ENCODE measurements at regions of chr13 and their contacts with region 1.

Region 1: DNA sequence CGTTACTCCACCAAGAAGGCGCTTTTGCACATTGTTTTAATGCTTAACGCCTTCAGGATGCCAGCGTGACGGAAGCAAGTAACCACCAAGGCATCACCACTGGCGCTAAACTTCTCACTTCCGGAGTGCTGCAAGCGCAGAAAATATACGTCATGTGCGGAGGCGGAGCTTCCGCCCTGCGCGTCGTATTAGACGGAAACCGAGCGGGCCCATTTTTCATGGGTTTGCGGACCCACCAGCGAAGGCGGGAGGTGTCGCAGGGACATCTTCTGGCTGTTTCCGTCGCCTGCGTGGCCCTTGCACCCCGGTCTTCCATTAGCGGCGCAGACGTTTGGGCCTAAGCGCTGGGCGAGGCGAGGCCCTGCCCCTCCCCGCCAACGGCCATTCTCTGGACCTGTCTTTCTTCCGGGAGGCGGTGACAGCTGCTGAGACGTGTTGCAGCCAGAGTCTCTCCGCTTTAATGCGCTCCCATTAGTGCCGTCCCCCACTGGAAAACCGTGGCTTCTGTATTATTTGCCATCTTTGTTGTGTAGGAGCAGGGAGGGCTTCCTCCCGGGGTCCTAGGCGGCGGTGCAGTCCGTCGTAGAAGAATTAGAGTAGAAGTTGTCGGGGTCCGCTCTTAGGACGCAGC is at the start of gene ERCC5:
- DNase-seq: peak; percentile 94
- H3K4me3 ChIP-seq: peak within 1 kb of the TSS; percentile 75 to 97 (median 87)
- H3K27ac ChIP-seq: peak within 1 kb of the TSS; percentile 78
- H3K4me1 ChIP-seq: peaks cover 7% of the 10 kb centered on the region
- H3K27me3 ChIP-seq: no peaks in the 10 kb centered on the region
- CTCF ChIP-seq: no peak
- POLR2A ChIP-seq: peak; percentile 91
- total RNA-seq, gene ERCC5: 36.0 and 40.1 TPM in 2 replicates

Region 2: GRCh38 chr13:101452519-101453485 is 1392.9 kb before region 1 on chr13 and contains the start of gene ITGBL1:
- CTCF ChIA-PET with region 1: no interaction called
- POLR2A ChIA-PET with region 1: no interaction called
- dilution Hi-C with region 1: no loop called
- intact Hi-C with region 1: loop called (anchors 10 kb)
- DNase-seq: peak; percentile 48
- H3K4me3 ChIP-seq: peak within 1 kb of the TSS in 2 of 3 experiments; percentile 24 to 37
- H3K27ac ChIP-seq: peak within 1 kb of the TSS; percentile 94
- H3K4me1 ChIP-seq: peaks cover 68% of the 10 kb centered on the region
- H3K27me3 ChIP-seq: no peaks in the 10 kb centered on the region
- CTCF ChIP-seq: no peak
- POLR2A ChIP-seq: no peak
- total RNA-seq, gene ITGBL1: 8.8 and 9.9 TPM in 2 replicates

Region 3: DNA sequence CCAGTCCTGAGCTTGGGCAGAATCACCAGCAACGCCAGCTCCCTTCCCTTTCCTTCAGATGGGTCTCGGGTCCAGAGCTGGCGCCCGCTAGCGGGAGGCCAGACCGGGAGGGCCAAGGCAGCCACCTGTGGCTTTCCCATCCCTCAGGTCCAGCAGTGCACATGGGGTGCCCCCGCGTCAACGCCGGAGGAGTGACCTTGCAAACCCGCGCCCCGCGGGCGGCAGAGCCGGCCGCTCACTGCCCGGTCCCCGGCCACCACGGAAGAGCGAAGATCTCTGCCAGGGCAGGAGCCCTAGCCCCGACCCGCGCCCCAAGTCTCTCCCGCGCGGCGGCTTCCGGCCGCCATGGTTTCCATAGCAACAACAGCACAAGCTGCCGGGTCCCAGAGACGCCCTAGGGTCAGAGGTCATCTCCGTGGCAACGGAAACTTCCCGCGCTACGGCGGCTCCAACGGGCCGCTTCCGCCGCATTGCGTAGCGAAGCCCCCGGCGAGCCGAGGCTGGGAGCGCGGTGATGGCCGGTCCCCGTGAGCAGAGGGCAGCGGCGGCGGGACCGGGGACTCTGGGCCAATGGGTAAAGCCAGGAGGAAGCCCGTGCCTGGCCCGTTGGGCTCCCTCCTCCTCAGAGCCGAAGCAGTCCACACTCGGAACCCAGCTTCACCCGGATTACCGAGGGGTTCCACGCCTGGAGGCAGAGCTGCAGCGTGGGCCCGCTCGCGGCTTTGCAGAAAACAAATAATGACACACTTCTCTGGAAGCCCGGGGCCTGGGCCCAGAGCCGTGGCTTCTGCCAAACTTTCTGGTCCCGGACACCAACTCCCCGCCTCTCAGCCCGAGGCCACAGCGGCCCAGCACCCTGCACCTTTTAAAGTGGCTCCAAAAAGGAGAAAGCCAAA is 451.3 kb before region 1 on chr13:
- CTCF ChIA-PET with region 1: no interaction called
- POLR2A ChIA-PET with region 1: no interaction called
- dilution Hi-C with region 1: no loop called
- intact Hi-C with region 1: loop called (anchors 5 kb)
- DNase-seq: peak; percentile 75
- H3K4me3 ChIP-seq: peak overlapping the region; percentile 60 to 68 (median 65)
- H3K27ac ChIP-seq: no peak overlapping the region
- H3K4me1 ChIP-seq: peaks cover 9% of the 10 kb centered on the region
- H3K27me3 ChIP-seq: peaks cover 11 to 26% of the 10 kb centered on the region in 2 experiments
- CTCF ChIP-seq: peak in 1 of 2 donors; percentile 30
- POLR2A ChIP-seq: no peak

Region 4: GRCh38 chr13:102596147-102597028 is 249.4 kb before region 1 on chr13 and contains the start of gene TPP2:
- CTCF ChIA-PET with region 1: interaction called, 19 read pairs
- POLR2A ChIA-PET with region 1: interaction called, 5 read pairs
- dilution Hi-C with region 1: loop called (anchors 25 kb)
- intact Hi-C with region 1: loop called (anchors 1 kb)
- DNase-seq: peak; percentile 99
- H3K4me3 ChIP-seq: peak within 1 kb of the TSS; percentile 92 to 99 (median 97)
- H3K27ac ChIP-seq: peak within 1 kb of the TSS; percentile 94
- H3K4me1 ChIP-seq: peaks cover 32% of the 10 kb centered on the region
- H3K27me3 ChIP-seq: no peaks in the 10 kb centered on the region
- CTCF ChIP-seq: no peak
- POLR2A ChIP-seq: peak; percentile 84
- total RNA-seq, gene TPP2: 46.7 TPM in 2 replicates

Region 5: GRCh38 chr13:102773441-102774215 is 72.1 kb before region 1 on chr13 and contains the start of gene TEX30:
- CTCF ChIA-PET with region 1: interaction called, 5 read pairs
- POLR2A ChIA-PET with region 1: interaction called, 4 read pairs
- dilution Hi-C with region 1: no loop called
- intact Hi-C with region 1: loop called (anchors 1 kb)
- DNase-seq: peak; percentile 90
- H3K4me3 ChIP-seq: peak within 1 kb of the TSS; percentile 85 to 94 (median 88)
- H3K27ac ChIP-seq: peak within 1 kb of the TSS; percentile 76
- H3K4me1 ChIP-seq: peaks cover 18% of the 10 kb centered on the region
- H3K27me3 ChIP-seq: no peaks in the 10 kb centered on the region
- CTCF ChIP-seq: peak in 1 of 2 donors; percentile 10
- POLR2A ChIP-seq: peak; percentile 97
- total RNA-seq, gene TEX30: 14.5 and 19.8 TPM in 2 replicates

Region 6: GRCh38 chr13:102825921-102826706 is 19.6 kb before region 1 on chr13:
- CTCF ChIA-PET with region 1: interaction called, 10 read pairs
- POLR2A ChIA-PET with region 1: no interaction called
- dilution Hi-C with region 1: no loop called
- intact Hi-C with region 1: no loop called
- DNase-seq: peak; percentile 58
- H3K4me3 ChIP-seq: peak overlapping the region in 2 of 3 experiments; percentile 5 to 46
- H3K27ac ChIP-seq: peak overlapping the region; percentile 71
- H3K4me1 ChIP-seq: peaks cover 16% of the 10 kb centered on the region
- H3K27me3 ChIP-seq: no peaks in the 10 kb centered on the region
- CTCF ChIP-seq: no peak
- POLR2A ChIP-seq: no peak

Region 7: DNA sequence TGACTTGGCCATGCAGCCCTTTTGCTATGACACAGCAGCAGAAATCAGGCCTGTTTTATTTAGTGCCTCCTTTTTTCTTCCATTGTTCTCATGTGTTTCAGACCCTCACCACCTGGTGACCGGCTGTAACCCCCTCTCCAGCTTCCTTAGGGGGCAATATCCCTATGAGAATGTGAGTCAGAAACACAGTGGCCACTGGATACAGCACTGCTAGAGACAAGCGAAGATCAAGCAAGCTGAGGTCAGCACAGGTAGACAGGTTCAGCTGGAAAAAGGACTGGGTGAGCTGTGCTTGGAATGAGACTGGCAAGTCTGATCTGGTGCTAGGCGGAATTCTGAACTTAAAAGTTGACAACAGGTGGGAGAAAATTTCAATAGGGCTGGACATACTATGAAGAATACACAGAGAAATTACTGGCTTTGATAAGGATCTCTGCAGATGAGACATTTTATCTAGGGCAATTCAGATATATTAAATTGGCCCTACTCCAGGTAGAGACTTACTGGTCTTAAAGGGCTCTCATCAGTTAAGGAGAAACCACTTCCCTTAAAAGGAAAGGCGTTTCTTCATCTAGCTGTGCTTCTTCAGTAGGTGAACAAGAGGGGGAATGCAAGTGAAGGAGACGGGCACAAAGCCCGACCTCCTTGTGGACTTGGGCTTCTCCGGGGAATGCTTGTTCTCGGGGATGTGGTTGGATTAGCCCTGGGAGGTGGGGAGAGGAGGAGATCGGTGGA is 83.4 kb after region 1 on chr13:
- CTCF ChIA-PET with region 1: no interaction called
- POLR2A ChIA-PET with region 1: no interaction called
- dilution Hi-C with region 1: no loop called
- intact Hi-C with region 1: no loop called
- DNase-seq: no peak
- H3K4me3 ChIP-seq: no peak overlapping the region
- H3K27ac ChIP-seq: no peak overlapping the region
- H3K4me1 ChIP-seq: no peaks in the 10 kb centered on the region
- H3K27me3 ChIP-seq: no peaks in the 10 kb centered on the region
- CTCF ChIP-seq: no peak
- POLR2A ChIP-seq: no peak